Left cardiac atrium (tissue), 4 donors: ENCODE measurements at regions of chr3 and their contacts with region 1.

Region 1: DNA sequence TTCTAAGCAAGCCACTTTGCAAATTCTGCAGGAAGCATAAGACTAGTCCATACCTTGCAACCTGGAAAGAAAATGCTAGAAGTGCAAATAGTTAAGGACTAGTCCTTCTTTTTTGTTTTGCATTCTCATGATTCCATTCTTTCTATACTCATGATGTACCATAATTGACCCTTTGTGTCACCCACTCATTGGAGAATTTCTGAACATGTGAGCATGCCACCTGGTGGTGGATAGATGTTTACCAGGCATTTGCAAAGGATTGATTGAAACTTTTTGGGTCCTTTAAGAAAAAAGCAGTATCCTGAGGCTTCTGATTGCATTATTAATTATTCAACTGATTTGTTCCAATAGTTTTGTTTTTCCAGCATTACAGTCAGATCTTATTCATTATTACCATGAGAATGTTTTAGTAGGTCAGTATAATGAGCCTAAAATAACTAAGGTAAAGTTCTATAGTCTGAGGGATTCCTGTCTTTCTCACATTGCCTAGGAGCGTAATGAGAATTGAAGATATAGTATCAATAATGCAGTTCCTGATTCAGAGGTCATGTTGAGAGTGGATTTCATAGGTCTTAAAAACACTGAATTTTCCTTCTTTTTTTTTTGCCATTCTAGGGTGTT is 20.2 kb upstream of the DIPK2A start:
- DNase-seq: no peak
- ATAC-seq: no peak

Region 2: DNA sequence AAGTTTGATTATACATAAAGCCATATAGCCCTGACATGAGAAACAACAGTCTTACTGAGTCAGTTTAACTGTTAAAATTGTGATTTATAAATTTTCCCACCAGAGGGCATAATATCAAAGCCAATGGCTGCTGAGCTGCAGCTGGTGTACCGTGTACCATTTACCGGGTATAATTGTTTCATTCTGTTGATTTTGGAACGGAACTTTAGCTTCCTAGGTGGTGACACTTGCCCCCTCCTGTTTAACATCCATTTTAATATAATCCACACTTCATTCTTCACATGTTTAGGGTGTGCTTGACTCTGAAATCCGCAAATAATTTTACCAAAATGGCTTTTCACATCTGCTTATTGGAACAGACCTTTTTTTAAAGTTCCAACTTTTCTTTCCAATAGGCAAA is 176.0 kb before region 1 on chr3:
- intact Hi-C with region 1: loop called in 1 of 2 experiments (anchors 10 kb)
- DNase-seq: no peak
- ATAC-seq: peak; percentile 77 to 78

Region 3: GRCh38 chr3:143895805-143896204 is 55.7 kb before region 1 on chr3:
- intact Hi-C with region 1: loop called in 1 of 2 experiments (anchors 10 kb)
- DNase-seq: no peak
- ATAC-seq: no peak